Calu3 (cell line): ENCODE measurements at regions of chr12 and their contacts with region 1.

Region 1: GRCh38 chr12:30847259-30847658 is 79.3 kb upstream of the TSPAN11 start:
- DNase-seq: peak; percentile 48
- H3K4me3 Mint-ChIP-seq: no peak overlapping the region
- H3K27ac Mint-ChIP-seq: no peak overlapping the region
- H3K4me1 Mint-ChIP-seq: peaks cover 10% of the 10 kb centered on the region
- H3K27me3 Mint-ChIP-seq: peaks cover 16% of the 10 kb centered on the region
- CTCF ChIP-seq: peak; percentile 66

Region 2: DNA sequence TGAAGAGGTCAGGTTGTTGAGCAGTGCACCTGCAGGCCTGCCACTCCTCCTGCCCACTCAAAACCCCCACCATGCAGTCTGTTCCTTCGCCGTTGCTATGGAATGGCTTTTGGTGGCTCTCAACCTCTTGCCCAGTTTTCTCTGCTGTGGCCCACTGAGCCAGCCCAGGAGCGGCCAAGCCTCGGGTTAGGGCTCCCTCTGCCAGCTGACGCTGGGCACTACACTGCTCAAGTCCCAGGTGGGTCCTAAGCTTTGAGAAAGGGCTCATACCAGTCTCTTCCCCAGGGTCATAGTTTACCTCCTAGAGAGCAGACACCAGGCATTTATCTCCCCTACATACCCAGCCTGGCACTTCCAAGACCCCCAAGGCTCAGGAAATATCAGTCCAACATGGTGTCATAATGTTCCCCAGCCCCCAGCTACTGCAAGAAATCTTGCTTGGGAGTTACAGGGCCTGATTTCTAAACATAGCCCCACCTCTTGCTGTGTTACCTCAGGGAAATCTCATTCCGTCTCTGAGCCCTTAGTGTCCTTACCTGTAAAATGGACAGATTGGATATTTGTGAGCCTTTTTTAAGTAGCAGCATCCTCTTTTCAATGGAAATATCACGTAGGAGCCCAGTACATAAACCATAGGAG is 138.7 kb after region 1 on chr12:
- CTCF ChIA-PET with region 1: interaction called, 19 read pairs
- intact Hi-C with region 1: loop called (anchors 1 kb)
- DNase-seq: peak; percentile 72
- H3K4me3 Mint-ChIP-seq: no peak overlapping the region
- H3K27ac Mint-ChIP-seq: no peak overlapping the region
- H3K4me1 Mint-ChIP-seq: no peaks in the 10 kb centered on the region
- H3K27me3 Mint-ChIP-seq: peaks cover 4% of the 10 kb centered on the region
- CTCF ChIP-seq: peak; percentile 53

Region 3: GRCh38 chr12:31238764-31239387 is 391.6 kb after region 1 on chr12:
- CTCF ChIA-PET with region 1: no interaction called
- intact Hi-C with region 1: loop called (anchors 2 kb)
- DNase-seq: peak; percentile 81
- H3K4me3 Mint-ChIP-seq: peak overlapping the region; percentile 23
- H3K27ac Mint-ChIP-seq: no peak overlapping the region
- H3K4me1 Mint-ChIP-seq: peaks cover 28% of the 10 kb centered on the region
- H3K27me3 Mint-ChIP-seq: peaks cover 29% of the 10 kb centered on the region
- CTCF ChIP-seq: peak; percentile 76